ENCODE measurements at regions of chr16 and their contacts with region 1.

Region 1: DNA sequence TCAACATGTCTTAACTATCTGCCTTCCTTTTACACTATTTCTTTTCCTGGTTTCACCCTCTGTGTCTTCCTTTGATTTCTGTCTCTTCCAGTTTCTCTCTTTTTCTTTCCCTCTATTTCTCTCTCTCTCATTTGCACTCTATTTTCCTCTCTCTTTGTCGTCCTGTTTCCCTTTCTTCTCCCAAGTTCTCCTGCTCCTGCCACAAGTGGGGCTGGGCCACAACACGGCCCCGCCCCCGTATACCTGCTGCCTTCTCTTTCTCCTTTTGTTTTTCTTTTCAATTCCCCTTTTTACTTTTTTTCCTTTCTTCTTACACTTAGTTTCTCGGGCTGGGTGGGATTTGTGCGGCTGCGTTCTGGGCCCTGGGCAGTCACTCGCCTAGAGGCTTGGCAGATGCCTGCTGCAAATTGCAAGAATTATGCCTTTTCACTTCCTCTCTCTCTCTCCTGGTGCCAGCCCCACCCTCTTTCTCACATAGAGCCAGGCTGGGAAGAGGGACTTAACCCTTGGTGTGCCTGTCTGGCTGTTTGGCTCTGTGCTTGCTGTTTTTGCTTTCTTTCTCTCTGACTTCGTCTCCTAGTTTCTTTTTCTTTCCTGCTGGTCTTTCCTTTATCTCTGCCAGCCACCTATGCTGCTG is 2139.4 kb downstream of the TP53TG3F start:
- DNase-seq: no peak
- ATAC-seq: no peak
- H3K4me3 ChIP-seq: no peak overlapping the region
- H3K27ac ChIP-seq: no peak overlapping the region
- H3K4me1 ChIP-seq: no peaks in the 10 kb centered on the region
- H3K27me3 ChIP-seq: no peaks in the 10 kb centered on the region
- CTCF ChIP-seq: no peak
- POLR2A ChIP-seq: no peak

Region 2: DNA sequence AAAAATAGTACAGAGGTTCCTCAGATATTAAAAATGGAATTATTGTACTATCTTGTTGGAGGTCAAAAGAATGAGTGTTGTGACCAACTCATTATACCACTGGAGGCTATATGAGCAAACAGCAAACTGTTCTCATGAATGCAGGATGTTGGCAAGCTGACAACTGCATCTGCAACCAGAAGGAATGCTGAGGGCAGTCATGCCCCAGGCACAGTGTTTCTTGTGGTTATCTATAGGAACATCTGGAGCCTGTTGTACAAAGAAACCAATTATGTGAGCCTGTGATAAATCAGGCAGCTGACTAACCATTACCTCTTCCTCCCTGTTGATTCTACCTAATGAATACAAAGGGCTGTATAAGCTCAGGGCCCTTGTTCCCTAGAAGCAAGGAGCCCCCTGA is 82.3 kb before region 1 on chr16:
- intact Hi-C with region 1: no loop called
- DNase-seq: no peak
- ATAC-seq: no peak
- H3K4me3 ChIP-seq: no peak overlapping the region
- H3K27ac ChIP-seq: no peak overlapping the region
- H3K4me1 ChIP-seq: no peaks in the 10 kb centered on the region
- H3K27me3 ChIP-seq: peaks cover 0 to 4% (median 0%) of the 10 kb centered on the region in 9 donors
- CTCF ChIP-seq: no peak
- POLR2A ChIP-seq: no peak

Region 3: GRCh38 chr16:35639233-35640205 is 40.7 kb after region 1 on chr16:
- intact Hi-C with region 1: loop called in 1 of 10 experiments (anchors 10 kb)
- DNase-seq: no peak
- ATAC-seq: no peak
- H3K4me3 ChIP-seq: no peak overlapping the region
- H3K27ac ChIP-seq: no peak overlapping the region
- H3K4me1 ChIP-seq: no peaks in the 10 kb centered on the region
- H3K27me3 ChIP-seq: no peaks in the 10 kb centered on the region
- CTCF ChIP-seq: no peak
- POLR2A ChIP-seq: no peak

Measured in heart left ventricle (tissue), 16 donors.